Lower leg skin (tissue), 4 donors: ENCODE measurements at regions of chr18 and their contacts with region 1.

Region 1: DNA sequence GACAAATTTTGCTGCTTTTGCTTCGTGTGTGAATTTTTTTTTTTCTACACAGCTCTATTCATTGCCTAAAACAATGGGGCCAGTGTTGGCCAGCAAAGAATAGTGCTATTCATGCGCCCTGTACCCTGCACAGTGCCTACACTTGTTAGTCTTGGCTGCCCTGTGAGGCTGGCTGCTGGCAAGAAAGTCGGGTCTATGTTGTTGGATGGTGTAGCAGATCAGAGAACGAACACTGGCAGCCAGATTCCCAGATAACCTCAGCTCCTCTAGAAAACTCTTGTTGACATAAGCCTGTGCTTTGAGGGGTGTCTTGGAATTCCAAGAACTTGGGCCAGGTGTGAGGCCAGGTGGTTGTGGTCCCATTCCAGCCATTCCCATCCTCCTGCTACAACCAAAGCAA is 455.7 kb upstream of the TCF4 start:
- DNase-seq: no peak
- H3K4me3 ChIP-seq: no peak overlapping the region
- CTCF ChIP-seq: no peak
- POLR2A ChIP-seq: no peak

Region 2: DNA sequence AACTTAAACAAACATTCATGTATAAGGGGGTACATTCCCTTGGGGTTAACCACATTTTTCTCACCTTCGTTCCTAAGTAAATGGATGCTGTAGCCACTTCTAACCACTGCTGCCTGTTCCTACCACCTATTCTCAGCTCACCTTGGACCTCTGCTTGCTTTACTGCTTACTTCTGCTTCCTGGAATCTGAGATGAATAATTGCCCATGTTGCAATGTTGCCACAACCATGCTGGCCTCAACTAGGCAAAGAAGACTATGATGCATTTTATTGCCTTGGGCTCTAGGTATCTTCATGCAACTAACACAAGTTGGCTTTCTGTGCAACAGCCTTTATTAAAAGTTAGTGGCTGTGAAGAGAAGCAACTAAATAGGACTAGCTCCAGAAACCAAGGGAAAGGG is 349.4 kb before region 1 on chr18:
- intact Hi-C with region 1: loop called (anchors 5 kb)
- DNase-seq: no peak
- H3K4me3 ChIP-seq: no peak overlapping the region
- CTCF ChIP-seq: no peak
- POLR2A ChIP-seq: no peak

Region 3: GRCh38 chr18:55968550-55968949 is 75.1 kb before region 1 on chr18:
- intact Hi-C with region 1: no loop called
- DNase-seq: no peak
- H3K4me3 ChIP-seq: no peak overlapping the region
- CTCF ChIP-seq: no peak
- POLR2A ChIP-seq: no peak